Activated T-helper 1 cell treated with anti-CD3 and anti-CD28 coated beads, Interleukin-12 subunit alpha, Interleukin-12 subunit beta, Interleukin-2, Interleukin-4 antibody, amounts not matched to agents 30 ng/mL and 10 ng/mL and 1 ng/mL, durations not matched to agents 14 hours and 24 hours and 36 hours (primary cell): ENCODE measurements at regions of chr16 and their contacts with region 1.

Region 1: GRCh38 chr16:67928561-67929364 is 2.9 kb downstream of the CTRL start:
- DNase-seq: peak; percentile 67
- H3K4me3 Mint-ChIP-seq: no peak overlapping the region
- H3K27ac Mint-ChIP-seq: no peak overlapping the region
- H3K4me1 Mint-ChIP-seq: peaks cover 1% of the 10 kb centered on the region
- H3K27me3 Mint-ChIP-seq: no peaks in the 10 kb centered on the region

Region 2: DNA sequence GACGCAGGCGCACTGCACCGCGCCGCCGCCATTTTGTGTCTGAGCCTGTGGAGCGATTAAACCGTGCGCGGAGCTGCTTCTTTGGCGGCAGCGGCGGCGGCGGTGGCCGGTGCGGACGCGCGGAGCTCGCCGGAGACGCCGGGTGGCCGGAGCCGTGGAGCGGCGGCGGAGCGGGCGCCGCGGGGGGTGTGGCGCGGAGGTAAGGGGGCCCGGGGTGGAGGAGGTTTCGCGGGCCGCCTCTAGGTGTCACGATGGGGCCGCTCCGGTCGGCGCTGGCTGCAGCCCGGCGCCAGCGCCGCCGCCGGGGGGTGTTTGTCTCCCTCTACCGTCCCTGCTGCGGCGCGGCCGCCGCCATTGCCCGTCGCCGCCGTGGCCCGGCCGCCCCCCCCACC is 366.2 kb before region 1 on chr16 and contains the start of gene CTCF:
- intact Hi-C with region 1: no loop called
- DNase-seq: no peak
- H3K4me3 Mint-ChIP-seq: peak within 1 kb of the TSS; percentile 90
- H3K27ac Mint-ChIP-seq: peak within 1 kb of the TSS; percentile 94
- H3K4me1 Mint-ChIP-seq: peaks cover 40% of the 10 kb centered on the region
- H3K27me3 Mint-ChIP-seq: no peaks in the 10 kb centered on the region
- total RNA-seq, gene CTCF: 64.7 and 67.6 TPM in 2 replicates

Region 3: DNA sequence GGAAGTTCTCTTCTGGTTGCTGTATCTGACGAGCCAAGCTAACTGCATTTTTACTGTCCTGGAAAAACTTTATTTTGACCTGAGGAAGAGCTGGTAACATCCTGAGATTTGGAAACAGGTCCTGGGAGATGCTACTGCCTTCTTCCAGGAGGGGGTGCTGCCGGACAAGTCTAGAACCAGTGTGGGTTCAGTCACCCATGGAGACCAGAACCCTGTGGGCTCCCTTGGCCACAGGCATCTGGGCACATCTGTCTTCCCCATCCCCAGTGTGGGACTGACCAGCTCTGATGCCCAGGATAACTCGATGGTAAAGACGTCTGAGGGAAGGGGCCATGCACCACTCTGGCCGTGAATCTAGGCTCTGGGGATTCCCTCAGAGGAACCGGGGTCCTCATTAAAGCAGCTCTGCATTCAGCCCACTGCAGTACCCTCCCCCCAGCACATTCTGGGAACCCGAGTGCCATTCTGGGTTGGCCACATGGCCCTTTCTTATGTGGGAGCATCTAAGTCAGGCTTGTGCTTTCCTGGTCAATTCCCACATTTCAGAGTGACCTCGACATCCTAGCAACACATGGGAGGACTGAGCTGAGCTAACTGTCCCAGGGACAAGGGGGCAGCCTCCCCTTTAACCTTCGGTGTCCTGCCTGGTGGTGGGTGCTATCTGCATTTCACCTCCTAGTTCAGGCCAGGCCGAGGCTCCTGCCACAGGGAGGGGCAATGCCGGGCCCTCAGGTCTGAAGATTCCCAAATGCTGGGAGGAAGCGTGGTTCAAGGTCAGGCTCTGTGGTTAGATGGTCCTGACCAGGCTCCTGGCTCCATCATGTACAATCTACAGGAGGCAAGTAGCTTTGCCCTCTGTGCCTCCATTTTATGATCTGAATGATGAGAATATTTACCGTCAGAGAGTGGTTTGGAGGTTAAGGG is 255.8 kb before region 1 on chr16:
- intact Hi-C with region 1: loop called (anchors 2 kb)
- DNase-seq: no peak
- H3K4me3 Mint-ChIP-seq: no peak overlapping the region
- H3K27ac Mint-ChIP-seq: no peak overlapping the region
- H3K4me1 Mint-ChIP-seq: no peaks in the 10 kb centered on the region
- H3K27me3 Mint-ChIP-seq: no peaks in the 10 kb centered on the region

Region 4: GRCh38 chr16:67883872-67884261 is 44.9 kb before region 1 on chr16:
- intact Hi-C with region 1: loop called (anchors 1 kb)
- DNase-seq: peak; percentile 56
- H3K4me3 Mint-ChIP-seq: no peak overlapping the region
- H3K27ac Mint-ChIP-seq: no peak overlapping the region
- H3K4me1 Mint-ChIP-seq: no peaks in the 10 kb centered on the region
- H3K27me3 Mint-ChIP-seq: no peaks in the 10 kb centered on the region